Ascending aorta (tissue), 2 donors: ENCODE measurements at regions of chr17 and their contacts with region 1.

Region 1: GRCh38 chr17:50638851-50639767 is 4.4 kb downstream of the ABCC3 start:
- DNase-seq: peak; percentile 77 to 98
- H3K4me3 ChIP-seq: no peak overlapping the region
- H3K27ac ChIP-seq: peak overlapping the region; percentile 65 to 72
- H3K4me1 ChIP-seq: peaks cover 16 to 50% of the 10 kb centered on the region in 2 donors
- H3K27me3 ChIP-seq: no peaks in the 10 kb centered on the region
- CTCF ChIP-seq: no peak

Region 2: DNA sequence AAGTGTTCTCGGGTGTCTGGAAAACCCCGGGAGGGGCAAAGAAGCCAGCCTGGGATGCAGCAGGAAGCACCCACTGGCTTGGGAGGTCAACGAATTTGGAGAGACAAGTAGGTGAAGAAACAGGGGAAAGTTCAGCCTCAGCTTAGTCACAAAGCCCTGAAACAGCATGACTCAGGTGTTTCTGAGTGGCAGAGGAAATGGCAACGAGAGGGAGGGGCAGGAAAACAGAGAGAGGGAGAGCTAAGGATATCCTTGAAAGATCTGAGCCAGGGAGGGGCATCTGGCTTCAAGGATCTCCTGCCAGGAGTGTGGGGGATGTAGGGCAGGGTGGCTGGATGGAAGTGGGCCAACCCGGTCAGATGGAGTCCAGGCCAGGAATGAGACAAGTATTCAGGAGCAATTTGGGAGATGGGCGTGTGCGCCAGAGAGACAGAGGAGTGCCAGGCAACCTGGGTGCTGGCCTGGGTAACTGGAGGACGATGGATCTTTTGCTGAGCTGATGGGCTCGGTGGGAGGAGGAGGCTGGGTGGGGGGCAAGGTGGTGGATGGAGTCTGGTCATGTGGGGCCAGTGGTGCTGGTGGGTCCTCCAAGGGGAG is 22.8 kb after region 1 on chr17:
- intact Hi-C with region 1: loop called (anchors 1 kb)
- DNase-seq: peak; percentile 55 to 88
- H3K4me3 ChIP-seq: no peak overlapping the region
- H3K27ac ChIP-seq: peak overlapping the region; percentile 76
- H3K4me1 ChIP-seq: peaks cover 18 to 37% of the 10 kb centered on the region in 2 donors
- H3K27me3 ChIP-seq: no peaks in the 10 kb centered on the region
- CTCF ChIP-seq: no peak

Region 3: GRCh38 chr17:50686494-50687199 is 47.5 kb after region 1 on chr17:
- intact Hi-C with region 1: loop called (anchors 2 kb)
- DNase-seq: peak; percentile 61 to 96
- H3K4me3 ChIP-seq: peak overlapping the region in 1 of 2 donors; percentile 15
- H3K27ac ChIP-seq: peak overlapping the region; percentile 89 to 91
- H3K4me1 ChIP-seq: peaks cover 15 to 41% of the 10 kb centered on the region in 2 donors
- H3K27me3 ChIP-seq: no peaks in the 10 kb centered on the region
- CTCF ChIP-seq: no peak